Activated T-helper 2 cell treated with anti-CD3 and anti-CD28 coated beads, Interferon-gamma antibody, Interleukin-2, Interleukin-4, amounts not matched to agents 10 μg/mL and 5 μg/mL and 100 μg/mL, durations not matched to agents 14 hours and 24 hours and 36 hours (primary cell): ENCODE measurements at regions of chr12 and their contacts with region 1.

Region 1: DNA sequence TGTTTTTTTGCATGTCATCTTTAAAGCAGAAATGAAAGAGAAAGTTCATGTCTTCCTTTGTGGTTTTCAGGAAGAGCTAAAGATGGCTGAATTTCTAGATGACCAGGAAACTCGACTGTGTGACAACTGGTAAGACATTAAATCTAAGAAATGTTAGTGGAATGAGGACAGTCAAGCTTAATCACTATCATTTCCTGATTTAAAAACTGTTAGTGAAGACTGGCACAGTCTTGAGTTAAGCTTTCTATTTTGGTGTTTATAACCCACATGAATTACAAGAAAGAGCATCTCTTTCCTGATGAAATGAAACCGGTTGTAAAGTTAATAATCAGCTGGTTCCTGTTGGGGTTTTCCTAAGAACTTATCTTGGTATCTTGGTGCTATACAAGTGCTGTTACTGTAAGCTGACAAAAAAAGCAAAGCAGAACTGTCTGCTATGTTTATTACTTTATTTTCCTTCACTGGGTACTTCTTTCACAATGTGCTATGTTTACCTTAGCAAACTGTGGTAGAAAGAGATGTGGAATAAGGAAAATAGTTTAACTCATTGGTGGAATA is 5.2 kb downstream of the TRAFD1 start:
- DNase-seq: no peak
- H3K4me3 Mint-ChIP-seq: peak overlapping the region; percentile 72
- H3K27ac Mint-ChIP-seq: peak overlapping the region; percentile 72
- H3K4me1 Mint-ChIP-seq: peaks cover 45% of the 10 kb centered on the region
- H3K27me3 Mint-ChIP-seq: no peaks in the 10 kb centered on the region

Region 2: GRCh38 chr12:111396726-111397445 is 733.6 kb before region 1 on chr12:
- intact Hi-C with region 1: no loop called
- DNase-seq: peak; percentile 78
- H3K4me3 Mint-ChIP-seq: peak overlapping the region; percentile 67
- H3K27ac Mint-ChIP-seq: peak overlapping the region; percentile 17
- H3K4me1 Mint-ChIP-seq: peaks cover 27% of the 10 kb centered on the region
- H3K27me3 Mint-ChIP-seq: peaks cover 6% of the 10 kb centered on the region

Region 3: GRCh38 chr12:111953455-111953854 is 177.1 kb before region 1 on chr12:
- intact Hi-C with region 1: loop called (anchors 5 kb)
- DNase-seq: no peak
- H3K4me3 Mint-ChIP-seq: no peak overlapping the region
- H3K27ac Mint-ChIP-seq: no peak overlapping the region
- H3K4me1 Mint-ChIP-seq: peaks cover 19% of the 10 kb centered on the region
- H3K27me3 Mint-ChIP-seq: no peaks in the 10 kb centered on the region

Region 4: DNA sequence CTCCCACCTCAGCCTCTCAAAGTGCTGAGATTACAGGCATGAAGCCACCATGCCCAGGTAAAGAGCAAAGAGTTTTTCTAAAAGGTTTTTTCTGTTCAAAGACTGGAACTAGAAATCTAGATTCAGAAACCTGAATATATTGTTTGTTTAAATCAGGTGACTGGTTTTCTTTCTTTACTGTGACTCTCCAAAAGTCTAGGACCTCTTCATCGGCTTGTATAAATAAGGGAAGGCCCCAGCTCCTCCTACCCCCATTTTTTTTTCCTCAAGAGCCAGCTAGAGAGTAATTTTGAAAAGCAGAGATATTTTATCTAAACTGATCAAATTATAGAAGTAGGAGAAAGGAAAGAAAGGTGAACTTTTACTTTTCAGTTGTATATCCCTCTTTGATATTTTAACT is 165.6 kb before region 1 on chr12:
- intact Hi-C with region 1: no loop called
- DNase-seq: no peak
- H3K4me3 Mint-ChIP-seq: no peak overlapping the region
- H3K27ac Mint-ChIP-seq: no peak overlapping the region
- H3K4me1 Mint-ChIP-seq: peaks cover 14% of the 10 kb centered on the region
- H3K27me3 Mint-ChIP-seq: no peaks in the 10 kb centered on the region

Region 5: GRCh38 chr12:112087055-112087850 is 43.3 kb before region 1 on chr12:
- intact Hi-C with region 1: loop called (anchors 1 kb)
- DNase-seq: no peak
- H3K4me3 Mint-ChIP-seq: no peak overlapping the region
- H3K27ac Mint-ChIP-seq: peak overlapping the region; percentile 3
- H3K4me1 Mint-ChIP-seq: peaks cover 23% of the 10 kb centered on the region
- H3K27me3 Mint-ChIP-seq: no peaks in the 10 kb centered on the region

Region 6: DNA sequence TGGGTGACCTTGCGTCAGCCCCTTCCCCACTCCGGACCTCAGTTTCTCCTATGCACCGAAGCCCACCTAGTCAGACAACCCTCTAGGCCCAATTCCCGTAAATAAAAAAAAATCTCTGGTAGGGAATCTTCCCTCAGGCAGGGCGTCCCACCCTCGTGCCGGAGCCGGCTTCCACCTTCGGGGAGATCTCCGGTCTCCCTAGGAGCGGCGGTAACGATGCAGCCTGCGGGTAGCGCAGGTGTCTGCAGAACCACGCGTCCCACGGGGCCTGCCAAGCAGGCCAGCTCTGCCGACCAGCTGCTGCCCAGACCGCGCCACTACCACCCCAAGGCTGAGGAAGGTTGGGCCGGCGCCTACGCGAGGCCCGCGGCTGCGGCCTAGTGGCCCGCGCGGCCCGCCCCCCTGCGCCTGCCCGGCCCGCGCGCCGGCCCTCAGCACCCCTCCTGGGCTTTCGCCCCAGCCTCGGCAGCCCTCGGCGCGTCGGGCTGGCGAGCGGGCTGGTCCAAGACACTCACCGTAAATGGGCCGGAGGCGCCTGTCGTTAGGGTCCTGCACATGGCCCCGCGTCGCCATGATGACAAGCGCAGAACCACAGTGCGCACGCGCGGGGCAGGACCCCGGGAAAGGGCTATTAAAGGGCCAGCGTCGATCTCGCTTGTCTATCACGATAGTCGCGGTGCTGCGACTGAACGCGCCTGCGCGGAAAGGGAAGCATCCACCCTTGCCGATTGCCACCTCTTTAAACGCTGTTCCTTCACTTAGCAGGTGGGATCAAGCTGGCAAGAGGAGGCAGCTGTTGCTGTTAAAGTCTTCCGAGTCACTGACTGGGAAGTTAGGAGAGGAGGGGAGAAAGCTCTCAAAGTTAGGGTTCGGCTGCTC is 22.1 kb before region 1 on chr12 and contains the start of gene NAA25:
- intact Hi-C with region 1: loop called (anchors 1 kb)
- DNase-seq: peak; percentile 84
- H3K4me3 Mint-ChIP-seq: peak within 1 kb of the TSS; percentile 97
- H3K27ac Mint-ChIP-seq: peak within 1 kb of the TSS; percentile 98
- H3K4me1 Mint-ChIP-seq: peaks cover 47% of the 10 kb centered on the region
- H3K27me3 Mint-ChIP-seq: no peaks in the 10 kb centered on the region
- total RNA-seq, gene NAA25: 43.3 and 48.7 TPM in 2 replicates

Region 7: GRCh38 chr12:112382232-112382796 is 251.8 kb after region 1 on chr12 and contains the start of gene HECTD4:
- intact Hi-C with region 1: loop called (anchors 2 kb)
- DNase-seq: peak; percentile 89
- H3K4me3 Mint-ChIP-seq: peak within 1 kb of the TSS; percentile 99
- H3K27ac Mint-ChIP-seq: peak within 1 kb of the TSS; percentile 96
- H3K4me1 Mint-ChIP-seq: peaks cover 34% of the 10 kb centered on the region
- H3K27me3 Mint-ChIP-seq: no peaks in the 10 kb centered on the region
- total RNA-seq, gene HECTD4: 34.7 and 36.6 TPM in 2 replicates